ENCODE measurements at regions of chr17 and their contacts with region 1.

Region 1: DNA sequence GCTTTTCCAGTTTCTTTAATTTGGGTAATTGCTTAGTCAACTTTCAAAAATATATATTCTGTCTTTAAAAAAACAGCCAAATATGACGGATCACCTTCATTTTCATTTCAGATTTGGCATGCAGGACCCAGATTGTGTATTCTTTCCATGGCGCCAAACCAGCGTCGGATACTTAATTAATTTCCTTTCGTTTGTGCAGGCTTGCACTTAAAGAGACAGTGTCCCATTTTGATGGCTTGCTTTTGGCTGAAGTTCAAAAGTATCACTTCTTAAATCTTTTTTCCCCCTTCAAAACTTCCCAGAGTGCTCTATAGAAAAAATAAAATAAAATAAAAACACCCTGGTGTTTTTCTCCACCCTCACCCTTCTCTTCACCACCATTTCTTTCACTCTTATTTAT is 394.5 kb upstream of the SOX9 start:
- DNase-seq: no peak
- ATAC-seq: no peak
- H3K4me3 Mint-ChIP-seq: no peak overlapping the region
- H3K27ac Mint-ChIP-seq: no peak overlapping the region
- H3K4me1 Mint-ChIP-seq: peaks cover 5% of the 10 kb centered on the region; the same call in 1 of the 2 replicates
- H3K27me3 Mint-ChIP-seq: no peaks in the 10 kb centered on the region
- CTCF ChIP-seq: no peak

Region 2: DNA sequence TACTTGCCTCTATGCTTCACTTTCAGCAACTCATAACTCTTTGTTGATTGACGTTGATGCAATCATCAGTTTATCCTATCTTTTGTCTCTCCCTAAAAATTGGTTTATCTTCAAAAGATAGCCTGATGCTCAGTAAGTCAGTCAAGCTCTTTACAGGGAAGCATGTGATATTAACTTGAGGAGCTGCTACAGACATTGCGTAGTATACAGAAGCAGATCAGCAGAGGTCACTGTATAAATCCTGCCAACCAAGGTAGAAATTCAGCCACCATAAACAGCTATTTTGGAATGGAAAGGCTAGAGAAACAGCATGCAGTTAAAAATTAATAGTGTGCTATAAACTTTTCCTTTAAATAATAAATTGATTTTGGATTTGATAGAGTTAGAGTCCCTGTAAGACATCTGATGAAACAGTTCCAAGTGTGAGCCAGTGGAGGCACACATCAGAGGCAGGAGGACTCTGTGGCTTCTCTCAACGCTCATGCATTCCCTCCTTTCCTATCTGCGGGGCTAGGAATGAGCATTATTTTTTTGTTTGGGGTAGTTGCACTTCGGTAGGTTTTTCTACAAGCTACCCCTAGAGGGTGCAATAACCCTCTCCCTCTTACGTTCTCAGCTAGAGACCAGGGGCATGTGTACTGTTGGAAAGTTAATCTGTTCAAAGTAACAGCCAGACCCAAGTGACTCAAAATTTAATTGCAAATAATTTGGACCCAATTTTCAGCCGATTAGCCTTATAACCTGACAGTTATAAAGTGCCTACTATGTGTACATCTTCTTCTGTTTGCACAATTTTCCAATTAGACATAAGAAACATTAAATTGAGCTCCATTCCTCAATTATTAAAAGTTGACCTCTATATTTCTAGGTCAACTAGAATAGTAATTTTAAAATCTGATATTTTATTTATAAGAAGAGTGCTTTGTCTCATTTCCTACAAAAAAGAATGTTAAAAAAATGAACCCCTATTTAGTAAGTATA is 253.2 kb before region 1 on chr17:
- CTCF ChIA-PET with region 1: no interaction called
- POLR2A ChIA-PET with region 1: no interaction called
- DNase-seq: peak; percentile 11
- ATAC-seq: peak; percentile 95
- H3K4me3 Mint-ChIP-seq: no peak overlapping the region
- H3K27ac Mint-ChIP-seq: no peak overlapping the region
- H3K4me1 Mint-ChIP-seq: peaks cover 6% of the 10 kb centered on the region; the same call in 1 of the 2 replicates
- H3K27me3 Mint-ChIP-seq: no peaks in the 10 kb centered on the region
- CTCF ChIP-seq: peak; percentile 66

Region 3: GRCh38 chr17:71764505-71764904 is 38.2 kb after region 1 on chr17:
- CTCF ChIA-PET with region 1: no interaction called
- POLR2A ChIA-PET with region 1: no interaction called
- DNase-seq: peak; percentile 72
- ATAC-seq: peak; percentile 100
- H3K4me3 Mint-ChIP-seq: no peak overlapping the region
- H3K27ac Mint-ChIP-seq: no peak overlapping the region
- H3K4me1 Mint-ChIP-seq: no peaks in the 10 kb centered on the region
- H3K27me3 Mint-ChIP-seq: no peaks in the 10 kb centered on the region
- CTCF ChIP-seq: 0 out of 2 replicates have a peak, but pooled peaks have one; percentile 46

Region 4: DNA sequence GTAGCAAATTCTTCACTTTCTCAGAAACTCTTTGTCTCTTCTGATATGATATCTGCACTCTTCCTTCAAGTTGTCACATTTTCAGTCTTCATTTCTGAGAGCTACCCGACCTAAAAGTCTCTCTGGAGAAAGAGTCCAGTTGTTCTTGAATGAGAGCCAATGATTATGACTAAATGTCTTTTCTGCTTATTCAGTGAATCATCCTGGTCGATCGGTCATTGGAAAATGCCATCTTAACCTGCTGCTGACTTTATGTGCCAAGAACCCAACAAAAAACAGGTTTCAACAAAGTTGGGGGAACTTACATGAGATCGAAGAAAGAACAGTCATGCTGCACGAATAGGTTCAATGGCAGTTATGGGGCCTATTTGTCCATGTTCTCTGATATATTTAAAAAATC is 410.4 kb after region 1 on chr17:
- CTCF ChIA-PET with region 1: no interaction called
- POLR2A ChIA-PET with region 1: interaction called, 10 read pairs
- DNase-seq: no peak
- ATAC-seq: no peak
- H3K4me3 Mint-ChIP-seq: no peak overlapping the region
- H3K27ac Mint-ChIP-seq: no peak overlapping the region
- H3K4me1 Mint-ChIP-seq: peaks cover 33% of the 10 kb centered on the region
- H3K27me3 Mint-ChIP-seq: peaks cover 4% of the 10 kb centered on the region; the same call in 1 of the 2 replicates
- CTCF ChIP-seq: no peak